Activated naive CD4-positive, alpha-beta T cell treated with anti-CD3 and anti-CD28 coated beads for 36 hours (primary cell): ENCODE measurements at regions of chr13 and their contacts with region 1.

Region 1: DNA sequence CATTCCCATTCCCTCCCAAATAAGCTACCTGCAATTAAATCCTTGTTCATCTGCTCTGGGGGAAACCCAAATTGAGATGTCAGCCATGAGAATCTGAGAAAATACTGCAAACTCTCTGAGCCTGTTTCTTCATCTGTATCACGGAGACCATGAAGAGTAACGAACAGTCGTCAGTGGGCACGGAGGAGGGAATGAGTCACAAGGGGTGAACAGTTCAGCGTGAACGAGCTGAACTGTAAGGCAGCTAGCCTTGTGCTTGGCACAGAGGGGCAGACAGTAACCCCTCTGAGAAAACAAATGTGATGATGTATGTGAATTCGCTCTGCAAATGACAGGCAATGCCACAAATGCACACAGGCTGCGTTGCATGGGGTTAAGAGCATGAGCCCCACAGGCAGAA is 288.7 kb downstream of the FOXO1 start:
- DNase-seq: peak; percentile 38
- H3K4me3 Mint-ChIP-seq: no peak overlapping the region
- H3K27ac Mint-ChIP-seq: no peak overlapping the region
- H3K4me1 Mint-ChIP-seq: peaks cover 31% of the 10 kb centered on the region
- H3K27me3 Mint-ChIP-seq: no peaks in the 10 kb centered on the region

Region 2: GRCh38 chr13:40363653-40364052 is 14.1 kb before region 1 on chr13:
- CTCF ChIA-PET with region 1: interaction called, 3 read pairs
- intact Hi-C with region 1: loop called (anchors 1 kb)
- DNase-seq: no peak
- H3K4me3 Mint-ChIP-seq: no peak overlapping the region
- H3K27ac Mint-ChIP-seq: no peak overlapping the region
- H3K4me1 Mint-ChIP-seq: peaks cover 25% of the 10 kb centered on the region
- H3K27me3 Mint-ChIP-seq: no peaks in the 10 kb centered on the region